Activated T-helper 1 cell treated with anti-CD3 and anti-CD28 coated beads, Interleukin-12 subunit alpha, Interleukin-12 subunit beta, Interleukin-2, Interleukin-4 antibody, amounts not matched to agents 30 ng/mL and 10 ng/mL and 1 ng/mL, durations not matched to agents 14 hours and 24 hours and 36 hours (primary cell): ENCODE measurements at regions of chr2 and their contacts with region 1.

Region 1: DNA sequence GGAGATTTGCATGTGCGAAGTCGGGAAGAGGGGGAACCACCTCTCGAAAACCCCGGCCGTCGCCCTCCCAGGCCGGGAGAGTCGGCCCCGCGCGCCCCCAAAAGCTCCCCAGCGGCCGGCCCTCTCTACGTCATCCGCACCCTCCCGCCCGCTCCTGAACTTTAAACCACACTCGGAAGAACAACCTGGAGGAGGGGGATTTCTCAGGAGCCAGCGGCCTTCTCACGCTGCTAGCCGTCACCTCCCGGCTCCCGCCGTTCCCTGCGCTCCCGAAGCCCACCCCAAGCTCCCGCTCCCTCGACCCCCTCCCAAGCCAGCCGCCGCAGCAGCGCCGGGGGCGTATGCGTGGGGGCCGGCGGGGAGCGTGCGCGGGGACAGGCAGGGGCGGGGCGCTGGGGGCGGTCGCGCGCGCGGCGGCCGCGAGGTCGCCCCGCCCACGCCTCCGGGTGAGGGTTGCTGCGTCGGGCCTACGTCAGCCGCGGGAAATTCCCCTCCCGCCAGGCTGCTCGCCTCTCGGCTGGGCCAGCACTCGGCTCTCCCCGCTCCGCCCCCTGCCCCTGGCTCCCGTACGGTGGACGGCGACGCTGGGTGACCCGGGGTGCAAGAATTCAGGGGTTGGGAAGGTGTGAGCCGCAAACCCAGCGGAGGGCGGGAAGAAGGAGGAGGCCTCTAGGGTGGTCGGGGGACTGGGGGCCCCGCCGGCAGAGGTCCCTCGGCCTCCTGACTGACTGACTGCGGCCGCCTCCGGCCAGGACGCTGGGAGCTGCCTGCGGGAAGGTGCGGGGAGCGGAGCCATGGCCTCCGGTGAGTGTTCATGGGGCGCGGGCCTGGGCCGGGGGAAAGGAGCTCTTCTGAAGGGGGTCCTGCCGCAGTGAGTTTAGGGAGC is at the start of gene REL:
- DNase-seq: peak; percentile 89
- H3K4me3 Mint-ChIP-seq: peak within 1 kb of the TSS; percentile 99
- H3K27ac Mint-ChIP-seq: peak within 1 kb of the TSS; percentile 99
- H3K4me1 Mint-ChIP-seq: peaks cover 45% of the 10 kb centered on the region
- H3K27me3 Mint-ChIP-seq: no peaks in the 10 kb centered on the region
- total RNA-seq, gene REL: 93.6 and 97.2 TPM in 2 replicates

Region 2: DNA sequence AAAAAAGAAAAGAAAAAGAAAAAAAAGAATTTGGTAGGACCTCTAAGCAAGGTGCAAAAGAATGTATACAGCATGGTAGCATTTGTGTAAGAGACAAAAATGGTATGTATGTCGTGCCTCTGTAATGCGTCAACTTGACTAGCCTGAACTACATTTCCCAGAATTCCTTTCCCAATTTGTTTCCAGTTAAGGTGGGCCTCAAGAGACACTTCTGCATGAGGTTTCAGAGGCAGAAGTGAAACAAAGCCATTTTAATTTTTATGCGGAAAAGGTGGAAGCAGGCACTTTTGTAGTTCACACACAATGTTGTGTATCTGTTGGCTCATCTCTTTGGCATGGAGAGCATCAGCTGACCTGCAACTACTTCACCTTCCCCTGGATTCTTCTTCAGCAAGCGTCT is 181.7 kb before region 1 on chr2:
- intact Hi-C with region 1: no loop called
- DNase-seq: no peak
- H3K4me3 Mint-ChIP-seq: no peak overlapping the region
- H3K27ac Mint-ChIP-seq: no peak overlapping the region
- H3K4me1 Mint-ChIP-seq: no peaks in the 10 kb centered on the region
- H3K27me3 Mint-ChIP-seq: peaks cover 7% of the 10 kb centered on the region

Region 3: DNA sequence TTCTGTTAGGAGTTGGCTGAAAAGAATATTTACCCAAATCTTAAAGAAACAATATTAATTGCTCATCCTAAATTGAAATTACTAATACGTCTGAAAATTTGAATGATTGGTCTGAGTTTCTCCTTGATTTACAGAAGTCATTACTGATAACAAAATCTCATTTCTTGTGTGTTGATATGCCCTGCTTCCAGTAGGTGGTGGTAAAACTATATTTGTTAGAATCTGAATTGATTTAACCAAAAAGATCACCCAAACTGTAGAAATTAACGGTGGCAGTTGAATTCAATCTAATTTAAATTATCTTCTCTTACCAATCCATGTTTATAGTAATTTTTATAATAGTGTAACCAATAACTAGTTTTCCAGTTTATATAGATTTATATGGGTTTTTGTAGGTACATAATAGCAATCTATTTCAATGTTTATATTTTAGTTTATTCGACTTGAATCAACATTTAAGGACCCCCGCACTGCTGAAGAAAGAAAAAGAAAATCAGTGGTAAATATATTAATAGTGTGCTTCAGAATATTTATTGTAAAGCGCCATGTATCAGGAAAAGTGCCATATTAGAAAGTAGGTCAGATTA is 86.9 kb before region 1 on chr2:
- intact Hi-C with region 1: loop called (anchors 1 kb)
- DNase-seq: no peak
- H3K4me3 Mint-ChIP-seq: no peak overlapping the region
- H3K27ac Mint-ChIP-seq: no peak overlapping the region
- H3K4me1 Mint-ChIP-seq: peaks cover 16% of the 10 kb centered on the region
- H3K27me3 Mint-ChIP-seq: no peaks in the 10 kb centered on the region

Region 4: GRCh38 chr2:60819155-60819862 is 62.0 kb before region 1 on chr2:
- intact Hi-C with region 1: loop called (anchors 1 kb)
- DNase-seq: peak; percentile 80
- H3K4me3 Mint-ChIP-seq: peak overlapping the region; percentile 20
- H3K27ac Mint-ChIP-seq: peak overlapping the region; percentile 91
- H3K4me1 Mint-ChIP-seq: peaks cover 44% of the 10 kb centered on the region
- H3K27me3 Mint-ChIP-seq: no peaks in the 10 kb centered on the region

Region 5: GRCh38 chr2:60861736-60862135 is 19.6 kb before region 1 on chr2:
- intact Hi-C with region 1: no loop called
- DNase-seq: no peak
- H3K4me3 Mint-ChIP-seq: no peak overlapping the region
- H3K27ac Mint-ChIP-seq: no peak overlapping the region
- H3K4me1 Mint-ChIP-seq: peaks cover 17% of the 10 kb centered on the region
- H3K27me3 Mint-ChIP-seq: peaks cover 5% of the 10 kb centered on the region

Region 6: DNA sequence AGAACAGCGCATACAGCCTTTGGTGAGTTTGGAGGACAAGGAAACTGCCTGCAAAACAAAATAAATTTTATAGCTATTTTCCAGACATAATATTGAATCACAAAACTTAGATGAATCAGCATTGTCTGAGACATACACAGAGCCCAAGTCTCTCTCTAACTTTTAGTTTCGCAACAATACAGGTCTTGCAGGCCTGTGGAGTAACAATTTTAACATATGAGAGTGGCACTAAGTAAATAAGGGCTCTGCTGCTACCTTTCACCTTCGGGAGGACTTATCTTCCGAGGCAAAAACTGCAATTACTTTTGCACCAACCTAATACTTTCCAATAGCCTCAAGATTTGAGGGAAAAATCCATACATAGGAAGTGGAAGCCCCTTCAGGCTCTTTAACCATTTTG is 80.2 kb after region 1 on chr2:
- intact Hi-C with region 1: no loop called
- DNase-seq: no peak
- H3K4me3 Mint-ChIP-seq: no peak overlapping the region
- H3K27ac Mint-ChIP-seq: no peak overlapping the region
- H3K4me1 Mint-ChIP-seq: peaks cover 27% of the 10 kb centered on the region
- H3K27me3 Mint-ChIP-seq: no peaks in the 10 kb centered on the region

Region 7: DNA sequence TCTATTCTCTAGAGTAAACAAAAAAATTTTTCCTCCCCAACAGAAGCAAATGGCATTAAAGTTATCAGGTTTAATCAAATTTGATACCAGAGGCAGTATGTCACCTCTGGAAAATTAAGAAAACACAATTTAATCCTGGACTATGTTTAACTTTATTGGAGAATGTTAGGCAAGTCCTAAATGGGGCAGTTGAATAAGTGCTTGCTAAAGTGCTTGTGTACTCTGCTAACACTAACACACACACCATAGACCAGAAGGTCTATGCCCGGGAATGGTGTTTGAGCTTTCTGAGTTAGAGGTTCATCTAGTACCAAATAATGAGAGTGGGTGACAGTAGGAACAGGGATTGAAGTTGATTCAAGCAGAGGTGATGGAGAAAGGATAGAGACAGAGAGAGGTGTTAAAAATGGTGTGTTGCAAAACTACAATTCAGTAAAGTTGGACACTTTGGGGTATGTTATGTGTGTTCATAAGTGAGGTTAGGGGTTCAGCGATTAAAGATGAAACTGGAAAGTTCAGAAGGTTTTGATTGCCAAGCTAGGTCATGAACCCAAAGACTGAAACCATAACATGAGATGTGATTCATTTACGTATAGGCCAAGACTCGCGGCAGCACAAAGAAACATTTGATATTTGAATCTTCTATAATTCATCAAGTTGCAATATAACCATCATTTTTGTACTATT is 95.7 kb after region 1 on chr2:
- intact Hi-C with region 1: loop called (anchors 1 kb)
- DNase-seq: no peak
- H3K4me3 Mint-ChIP-seq: no peak overlapping the region
- H3K27ac Mint-ChIP-seq: peak overlapping the region; percentile 38
- H3K4me1 Mint-ChIP-seq: peaks cover 29% of the 10 kb centered on the region
- H3K27me3 Mint-ChIP-seq: no peaks in the 10 kb centered on the region

Region 8: GRCh38 chr2:61065715-61066709 is 184.7 kb after region 1 on chr2 and contains the start of gene SANBR:
- intact Hi-C with region 1: loop called (anchors 5 kb)
- DNase-seq: peak; percentile 85
- H3K4me3 Mint-ChIP-seq: peak within 1 kb of the TSS; percentile 92
- H3K27ac Mint-ChIP-seq: peak within 1 kb of the TSS; percentile 87
- H3K4me1 Mint-ChIP-seq: peaks cover 16% of the 10 kb centered on the region
- H3K27me3 Mint-ChIP-seq: peaks cover 5% of the 10 kb centered on the region
- total RNA-seq, gene SANBR: 2.0 and 2.2 TPM in 2 replicates

Region 9: DNA sequence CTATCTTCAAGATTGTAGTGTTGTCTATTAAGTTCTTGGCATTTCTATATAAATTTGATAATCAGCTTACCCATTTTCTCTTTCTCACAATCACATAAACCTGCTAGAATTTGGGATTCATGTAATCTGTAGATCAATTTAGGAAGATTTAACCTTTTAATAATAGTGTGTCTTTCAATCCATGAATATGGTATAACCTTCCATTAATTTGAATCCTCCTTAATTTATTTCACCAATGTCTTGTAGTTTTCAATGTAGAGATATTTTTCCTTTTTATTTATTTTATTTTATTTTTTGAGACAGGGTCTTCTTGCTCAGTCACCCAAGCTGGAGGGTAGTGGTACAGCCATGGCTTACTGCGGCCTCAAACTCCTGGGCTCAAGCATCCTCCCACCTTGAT is 204.6 kb after region 1 on chr2:
- intact Hi-C with region 1: no loop called
- DNase-seq: no peak
- H3K4me3 Mint-ChIP-seq: no peak overlapping the region
- H3K27ac Mint-ChIP-seq: no peak overlapping the region
- H3K4me1 Mint-ChIP-seq: no peaks in the 10 kb centered on the region
- H3K27me3 Mint-ChIP-seq: no peaks in the 10 kb centered on the region

Region 10: DNA sequence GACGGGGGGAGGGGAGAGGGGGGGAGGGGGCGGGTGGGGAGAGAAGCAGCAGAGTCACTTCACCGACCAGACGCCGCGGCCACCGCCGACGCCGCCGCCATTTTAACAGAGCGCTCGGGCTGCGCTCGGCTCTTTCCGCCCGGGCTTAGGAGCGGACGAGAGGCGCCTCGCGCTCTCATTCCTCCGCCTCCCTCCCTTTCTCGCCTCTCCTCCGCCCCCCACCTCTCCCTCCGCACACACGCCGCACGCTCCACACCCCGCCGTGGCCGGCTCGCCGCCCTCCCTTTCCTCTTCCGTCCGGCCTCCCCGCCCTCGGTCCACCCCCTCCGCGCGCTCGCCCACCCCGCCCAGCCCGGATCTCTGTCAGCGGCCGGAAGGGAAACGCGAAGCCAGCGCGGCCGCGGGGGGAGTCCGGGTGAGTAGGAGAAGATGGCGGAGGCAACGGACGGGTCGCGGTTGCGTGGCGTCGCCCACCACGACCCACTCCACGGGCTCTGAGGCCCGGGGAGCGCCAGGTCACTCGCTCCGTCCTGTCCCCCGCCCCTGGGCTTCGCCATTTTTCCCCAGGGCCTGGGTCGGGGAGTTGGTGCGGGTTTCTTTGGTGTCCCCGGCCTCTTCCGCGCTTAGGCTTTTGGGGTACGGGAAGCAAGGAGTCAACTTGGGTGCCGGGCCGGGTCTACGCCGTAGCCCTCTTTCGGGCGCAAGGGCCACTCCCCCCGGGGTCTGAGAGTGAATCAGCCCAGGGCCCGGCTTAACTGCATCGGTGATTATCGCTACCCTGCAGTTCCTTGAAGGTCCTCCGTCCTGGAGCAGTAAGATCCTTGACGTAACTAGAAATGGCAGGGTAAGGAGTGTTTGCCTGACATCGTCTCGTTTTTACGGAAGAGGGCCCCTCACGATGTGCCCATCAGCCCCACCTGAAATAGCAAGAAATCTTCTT is 589.9 kb after region 1 on chr2 and contains the start of gene USP34:
- intact Hi-C with region 1: loop called (anchors 2 kb)
- DNase-seq: peak; percentile 88
- H3K4me3 Mint-ChIP-seq: peak within 1 kb of the TSS; percentile 95
- H3K27ac Mint-ChIP-seq: peak within 1 kb of the TSS; percentile 94
- H3K4me1 Mint-ChIP-seq: peaks cover 28% of the 10 kb centered on the region
- H3K27me3 Mint-ChIP-seq: no peaks in the 10 kb centered on the region
- total RNA-seq, gene USP34: 91.3 and 98.1 TPM in 2 replicates

Region 11: DNA sequence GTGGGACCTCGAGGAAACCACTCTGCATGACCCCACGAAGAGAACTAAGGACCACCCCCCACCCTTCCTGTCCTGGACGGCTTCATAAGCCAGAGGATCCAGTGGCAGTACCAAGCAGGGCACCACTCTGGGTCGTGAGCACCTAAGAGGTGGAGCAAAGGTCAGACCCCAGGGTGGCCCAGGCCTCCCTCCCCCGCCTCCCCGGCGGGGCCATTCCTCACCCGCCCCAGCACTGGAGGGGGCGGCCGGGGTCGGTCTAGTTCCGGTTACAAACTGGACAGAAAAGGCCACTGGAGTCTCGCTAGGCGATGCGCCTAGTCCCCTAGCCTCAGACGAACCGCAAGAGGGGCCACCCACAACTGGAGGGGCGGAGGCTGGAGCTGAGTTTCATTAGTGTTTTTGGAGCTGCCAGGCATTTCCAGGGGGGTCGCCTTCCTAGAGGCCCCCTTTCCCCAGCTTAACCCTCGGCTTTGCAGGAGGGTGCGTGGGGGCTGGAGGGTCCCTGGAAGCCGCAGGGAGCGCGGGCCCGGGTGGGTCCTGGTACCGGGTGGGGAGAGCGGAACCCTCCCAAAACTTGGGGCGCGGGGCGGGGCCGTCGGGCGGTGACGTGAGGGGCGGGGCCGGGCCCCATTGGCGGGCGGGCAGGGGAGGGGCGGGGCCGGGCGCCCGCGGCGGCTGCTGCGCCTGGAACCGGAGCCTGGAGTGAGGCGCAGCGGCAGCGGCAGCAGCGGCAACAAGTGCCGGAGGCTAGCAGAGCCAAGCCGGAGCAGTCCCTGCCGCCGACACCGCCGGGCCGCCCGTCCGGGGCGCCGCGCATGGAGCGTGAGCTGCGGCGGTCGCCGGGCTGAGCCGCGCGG is 1314.4 kb after region 1 on chr2 and contains the start of gene B3GNT2:
- intact Hi-C with region 1: loop called (anchors 5 kb)
- DNase-seq: peak; percentile 75
- H3K4me3 Mint-ChIP-seq: peak within 1 kb of the TSS; percentile 87
- H3K27ac Mint-ChIP-seq: peak within 1 kb of the TSS; percentile 89
- H3K4me1 Mint-ChIP-seq: peaks cover 36% of the 10 kb centered on the region
- H3K27me3 Mint-ChIP-seq: no peaks in the 10 kb centered on the region
- total RNA-seq, gene B3GNT2: 32.8 and 37.3 TPM in 2 replicates